A673 (cell line): ENCODE measurements at regions of chr20 and their contacts with region 1.

Region 1: DNA sequence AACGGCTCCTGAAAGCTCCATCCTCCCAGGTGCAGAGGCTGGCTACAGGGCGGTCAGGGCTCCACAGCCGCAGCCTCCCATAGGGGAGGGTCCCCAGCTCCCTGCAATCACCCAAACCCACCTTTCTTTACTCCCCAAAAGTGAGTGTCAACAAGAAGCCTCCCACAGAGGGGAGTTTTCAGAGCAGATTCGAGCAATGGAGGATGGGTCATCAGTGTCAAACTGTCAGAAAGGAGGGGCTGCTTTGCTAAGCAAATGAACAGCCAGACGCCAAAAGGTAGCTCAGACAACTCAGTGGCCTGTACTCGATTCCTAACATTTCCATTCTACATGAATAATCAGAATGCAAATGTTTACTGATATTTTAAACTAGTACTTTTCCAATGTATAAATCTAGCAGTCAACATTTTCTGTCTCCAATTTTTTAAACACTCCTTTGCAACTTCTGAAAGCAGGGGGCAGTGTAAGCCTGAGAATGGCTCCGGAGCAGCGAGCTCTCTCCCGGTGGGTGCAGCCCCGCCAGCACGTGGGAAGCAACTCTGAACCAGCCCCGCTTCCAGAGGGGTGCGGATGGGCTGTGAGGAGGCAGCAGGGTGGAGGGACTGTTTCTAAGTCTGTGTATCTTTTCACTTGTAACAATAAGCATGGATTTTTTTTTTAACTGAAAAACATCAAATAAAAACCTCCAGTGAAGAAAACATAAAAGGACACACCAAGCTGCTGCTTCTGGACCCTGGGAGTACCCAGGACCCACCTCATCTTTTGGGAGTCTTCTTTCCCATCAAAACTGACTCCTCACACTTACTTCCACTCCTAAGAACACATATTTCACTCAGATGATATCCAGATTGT is 54.9 kb downstream of the TAF4 start:
- DNase-seq: peak; percentile 72
- H3K4me3 ChIP-seq: no peak overlapping the region
- H3K27ac ChIP-seq: no peak overlapping the region
- H3K4me1 ChIP-seq: peaks cover 4% of the 10 kb centered on the region
- H3K27me3 ChIP-seq: no peaks in the 10 kb centered on the region
- CTCF ChIP-seq: peak; percentile 75

Region 2: GRCh38 chr20:61934716-61935544 is 75.8 kb before region 1 on chr20:
- CTCF ChIA-PET with region 1: no interaction called
- POLR2A ChIA-PET with region 1: no interaction called
- intact Hi-C with region 1: no loop called
- DNase-seq: no peak
- H3K4me3 ChIP-seq: no peak overlapping the region
- H3K27ac ChIP-seq: no peak overlapping the region
- H3K4me1 ChIP-seq: no peaks in the 10 kb centered on the region
- H3K27me3 ChIP-seq: peaks cover 13% of the 10 kb centered on the region
- CTCF ChIP-seq: no peak

Region 3: GRCh38 chr20:62134405-62135231 is 123.8 kb after region 1 on chr20:
- CTCF ChIA-PET with region 1: interaction called, 6 read pairs
- POLR2A ChIA-PET with region 1: no interaction called
- intact Hi-C with region 1: loop called (anchors 1 kb)
- DNase-seq: no peak
- H3K4me3 ChIP-seq: no peak overlapping the region
- H3K27ac ChIP-seq: no peak overlapping the region
- H3K4me1 ChIP-seq: peaks cover 1% of the 10 kb centered on the region
- H3K27me3 ChIP-seq: no peaks in the 10 kb centered on the region
- CTCF ChIP-seq: no peak